ENCODE measurements at regions of chr11 and their contacts with region 1.

Region 1: DNA sequence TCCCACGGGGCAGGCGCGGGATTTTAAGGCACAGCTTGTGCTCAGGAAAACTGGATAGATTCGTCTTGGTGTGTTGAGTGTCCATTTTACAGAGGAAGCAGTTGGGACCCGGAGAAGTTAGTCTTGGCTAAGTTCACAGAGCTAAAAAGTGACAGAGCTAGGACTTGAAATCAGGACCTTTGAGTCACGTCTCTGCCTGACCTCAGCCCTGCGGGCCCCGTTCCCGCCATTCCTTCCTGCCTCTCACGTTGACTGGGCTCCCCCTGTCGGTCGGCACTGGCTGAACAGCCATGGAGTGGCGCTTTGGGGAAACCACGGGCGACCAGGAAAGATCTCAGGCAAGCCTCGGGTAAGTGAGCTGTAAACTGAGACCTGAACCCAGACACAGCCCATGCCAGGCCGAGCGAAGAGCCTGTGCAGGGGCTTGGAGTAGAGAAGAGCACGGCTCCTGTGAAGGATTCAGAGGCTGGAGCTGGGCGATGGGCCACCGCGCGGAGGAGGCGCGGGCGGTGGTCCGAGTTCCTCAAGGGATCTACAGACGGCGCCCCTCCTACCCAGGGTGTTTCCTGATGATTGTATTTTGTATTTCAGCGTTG is 54.1 kb downstream of the WNT11 start:
- DNase-seq: peak; percentile 92
- H3K4me3 ChIP-seq: peak overlapping the region; percentile 43
- H3K27ac ChIP-seq: no peak overlapping the region
- H3K4me1 ChIP-seq: no peaks in the 10 kb centered on the region
- H3K27me3 ChIP-seq: no peaks in the 10 kb centered on the region
- CTCF ChIP-seq: peak; percentile 100

Region 2: GRCh38 chr11:75802913-75803820 is 349.0 kb before region 1 on chr11:
- CTCF ChIA-PET with region 1: no interaction called
- POLR2A ChIA-PET with region 1: no interaction called
- intact Hi-C with region 1: loop called (anchors 5 kb)
- DNase-seq: peak; percentile 76
- H3K4me3 ChIP-seq: no peak overlapping the region
- H3K27ac ChIP-seq: no peak overlapping the region
- H3K4me1 ChIP-seq: no peaks in the 10 kb centered on the region
- H3K27me3 ChIP-seq: no peaks in the 10 kb centered on the region
- CTCF ChIP-seq: peak; percentile 97

Region 3: GRCh38 chr11:76008474-76008873 is 143.7 kb before region 1 on chr11:
- CTCF ChIA-PET with region 1: no interaction called
- POLR2A ChIA-PET with region 1: interaction called, 17 read pairs
- intact Hi-C with region 1: no loop called
- DNase-seq: no peak
- H3K4me3 ChIP-seq: no peak overlapping the region
- H3K27ac ChIP-seq: no peak overlapping the region
- H3K4me1 ChIP-seq: no peaks in the 10 kb centered on the region
- H3K27me3 ChIP-seq: no peaks in the 10 kb centered on the region
- CTCF ChIP-seq: no peak

Region 4: DNA sequence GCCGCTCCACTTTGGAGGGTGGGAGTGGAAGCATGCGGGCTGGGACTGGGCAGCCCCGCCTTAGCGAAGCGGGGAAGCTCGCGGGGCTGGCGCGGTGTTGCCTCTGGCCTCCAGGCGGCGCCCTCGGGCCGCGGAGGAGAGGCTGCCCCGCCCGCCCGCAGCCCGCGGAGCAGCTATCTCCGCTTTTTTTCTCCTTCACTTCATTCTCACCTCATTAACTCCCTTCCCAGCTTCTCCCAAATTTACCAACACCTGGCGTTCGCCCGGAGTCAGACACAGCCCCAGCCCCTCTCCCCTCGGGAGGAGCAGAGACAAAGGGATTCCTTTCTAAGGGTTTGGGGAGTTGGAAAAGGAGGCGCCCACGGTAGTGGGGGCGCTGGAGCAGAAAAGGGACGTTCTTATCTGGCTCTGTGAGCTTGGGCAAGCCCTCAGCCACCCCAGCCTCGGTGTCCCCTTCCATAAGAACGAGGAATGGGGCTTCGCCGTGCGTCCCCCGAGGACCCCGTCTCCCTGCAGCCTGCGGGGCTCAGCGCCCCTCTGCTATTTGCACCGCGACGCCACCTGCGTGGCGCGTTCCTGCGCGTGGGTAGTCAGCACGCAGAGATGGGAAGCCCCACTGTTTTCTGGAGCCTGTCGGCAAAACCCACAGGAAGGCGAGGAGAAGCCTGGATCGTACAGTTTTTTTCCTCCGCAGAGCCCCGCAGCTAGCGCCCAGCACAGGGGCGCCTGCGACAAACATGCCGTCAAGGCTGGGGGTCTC is 55.6 kb after region 1 on chr11:
- CTCF ChIA-PET with region 1: interaction called, 10 read pairs
- POLR2A ChIA-PET with region 1: no interaction called
- intact Hi-C with region 1: no loop called
- DNase-seq: peak; percentile 93
- H3K4me3 ChIP-seq: peak overlapping the region; percentile 56
- H3K27ac ChIP-seq: no peak overlapping the region
- H3K4me1 ChIP-seq: peaks cover 34% of the 10 kb centered on the region
- H3K27me3 ChIP-seq: peaks cover 69% of the 10 kb centered on the region
- CTCF ChIP-seq: peak; percentile 93